ENCODE measurements at regions of chr3 and their contacts with region 1.

Region 1: GRCh38 chr3:112351823-112352222 is 18.9 kb downstream of the CD200 start:
- DNase-seq: no peak
- ATAC-seq: no peak
- H3K4me3 ChIP-seq: no peak overlapping the region
- H3K4me3 Mint-ChIP-seq: no peak overlapping the region
- H3K27ac ChIP-seq: no peak overlapping the region
- H3K27ac Mint-ChIP-seq: no peak overlapping the region
- H3K4me1 ChIP-seq: no peaks in the 10 kb centered on the region
- H3K4me1 Mint-ChIP-seq: peaks cover 4% of the 10 kb centered on the region
- H3K27me3 ChIP-seq: no peaks in the 10 kb centered on the region
- H3K27me3 Mint-ChIP-seq: no peaks in the 10 kb centered on the region
- CTCF ChIP-seq: no peak

Region 2: DNA sequence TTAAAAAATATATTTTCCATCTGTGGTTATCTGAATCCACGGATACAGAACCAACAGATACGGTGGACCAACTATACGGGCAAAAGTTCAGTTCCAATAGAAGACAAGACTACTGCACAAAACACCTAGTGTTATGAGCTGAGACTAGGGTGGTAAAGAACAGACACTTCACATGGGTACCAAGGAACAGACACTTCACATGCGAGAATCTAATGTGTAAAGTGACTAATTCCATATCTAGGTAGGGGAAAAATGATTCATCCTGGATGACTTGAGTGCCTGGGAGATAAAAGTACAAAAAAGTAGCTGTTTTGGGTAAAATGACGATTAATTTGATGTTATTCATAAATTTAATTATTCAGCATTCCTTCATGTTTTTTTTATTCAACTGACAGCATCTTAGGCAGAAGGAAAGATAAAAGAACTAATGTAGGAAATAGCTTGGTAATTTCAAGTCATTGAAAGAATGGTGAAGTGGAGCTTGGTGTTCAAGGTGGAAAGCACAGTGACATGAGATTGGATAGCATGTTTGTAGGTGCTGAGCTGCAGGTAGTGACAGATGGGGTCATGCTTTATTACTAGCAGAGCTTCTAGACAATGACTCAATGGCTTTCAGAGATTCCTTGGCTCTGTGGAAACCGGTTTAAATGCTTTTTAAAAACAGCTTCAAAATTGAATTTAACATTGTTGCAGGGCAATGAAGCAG is 13.6 kb before region 1 on chr3:
- CTCF ChIA-PET with region 1: no interaction called
- POLR2A ChIA-PET with region 1: no interaction called
- intact Hi-C with region 1: loop called in 1 of 2 experiments (anchors 2 kb)
- DNase-seq: no peak
- ATAC-seq: peak; percentile 26
- H3K4me3 ChIP-seq: no peak overlapping the region
- H3K4me3 Mint-ChIP-seq: no peak overlapping the region
- H3K27ac ChIP-seq: no peak overlapping the region
- H3K27ac Mint-ChIP-seq: peak overlapping the region; percentile 6
- H3K4me1 ChIP-seq: peaks cover 5% of the 10 kb centered on the region
- H3K4me1 Mint-ChIP-seq: peaks cover 62% of the 10 kb centered on the region
- H3K27me3 ChIP-seq: no peaks in the 10 kb centered on the region
- H3K27me3 Mint-ChIP-seq: no peaks in the 10 kb centered on the region
- CTCF ChIP-seq: no peak